Caco-2 (cell line): ENCODE measurements at regions of chr22 and their contacts with region 1.

Region 1: GRCh38 chr22:27647540-27647939 is 154.0 kb downstream of the MN1 start:
- DNase-seq: peak; percentile 74 to 85
- H3K4me3 ChIP-seq: no peak overlapping the region
- H3K4me3 Mint-ChIP-seq: no peak overlapping the region
- H3K27ac Mint-ChIP-seq: peak overlapping the region; percentile 68
- H3K4me1 ChIP-seq: peaks cover 49% of the 10 kb centered on the region
- H3K4me1 Mint-ChIP-seq: peaks cover 37% of the 10 kb centered on the region
- H3K27me3 ChIP-seq: no peaks in the 10 kb centered on the region
- H3K27me3 Mint-ChIP-seq: no peaks in the 10 kb centered on the region
- CTCF ChIP-seq: no peak

Region 2: DNA sequence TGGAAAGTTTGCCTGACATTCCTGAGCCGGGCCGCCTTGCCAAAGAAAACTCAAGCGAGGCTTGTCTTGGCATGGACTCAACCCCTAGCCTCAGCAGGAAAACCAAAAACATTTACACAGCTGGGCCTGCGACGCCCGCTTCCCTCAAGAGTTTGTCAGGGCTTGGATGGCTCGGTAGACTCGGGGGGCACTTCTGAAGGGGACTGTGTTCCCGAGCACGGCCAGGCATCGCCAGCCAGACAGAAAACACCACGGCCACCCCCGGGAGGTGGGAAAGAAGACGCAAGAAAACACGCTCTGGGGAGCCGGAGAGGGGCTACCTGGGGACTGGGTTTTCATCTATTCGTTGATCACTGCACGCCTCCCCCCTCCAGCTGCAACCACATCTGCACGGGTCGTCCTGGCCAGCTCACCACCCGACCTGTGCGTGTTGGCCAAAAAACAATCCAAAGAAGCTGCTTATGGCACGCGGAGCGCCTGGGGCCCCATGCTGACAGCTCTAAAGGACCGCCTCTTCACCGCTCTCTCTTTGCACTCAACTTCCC is 226.7 kb before region 1 on chr22:
- CTCF ChIA-PET with region 1: no interaction called
- POLR2A ChIA-PET with region 1: no interaction called
- intact Hi-C with region 1: no loop called
- DNase-seq: no peak
- H3K4me3 ChIP-seq: no peak overlapping the region
- H3K4me3 Mint-ChIP-seq: no peak overlapping the region
- H3K27ac Mint-ChIP-seq: no peak overlapping the region
- H3K4me1 ChIP-seq: no peaks in the 10 kb centered on the region
- H3K4me1 Mint-ChIP-seq: no peaks in the 10 kb centered on the region
- H3K27me3 ChIP-seq: no peaks in the 10 kb centered on the region
- H3K27me3 Mint-ChIP-seq: peaks cover 12% of the 10 kb centered on the region
- CTCF ChIP-seq: no peak

Region 3: GRCh38 chr22:27670701-27671412 is 23.3 kb after region 1 on chr22:
- CTCF ChIA-PET with region 1: no interaction called
- POLR2A ChIA-PET with region 1: no interaction called
- intact Hi-C with region 1: loop called (anchors 2 kb)
- DNase-seq: peak; percentile 95 to 97
- H3K4me3 ChIP-seq: no peak overlapping the region
- H3K4me3 Mint-ChIP-seq: peak overlapping the region; percentile 54
- H3K27ac Mint-ChIP-seq: peak overlapping the region; percentile 90
- H3K4me1 ChIP-seq: peaks cover 27% of the 10 kb centered on the region
- H3K4me1 Mint-ChIP-seq: peaks cover 36% of the 10 kb centered on the region
- H3K27me3 ChIP-seq: no peaks in the 10 kb centered on the region
- H3K27me3 Mint-ChIP-seq: no peaks in the 10 kb centered on the region
- CTCF ChIP-seq: no peak

Region 4: GRCh38 chr22:27682437-27682836 is 34.9 kb after region 1 on chr22:
- CTCF ChIA-PET with region 1: no interaction called
- POLR2A ChIA-PET with region 1: no interaction called
- intact Hi-C with region 1: no loop called
- DNase-seq: peak in 1 of 2 experiments; percentile 10
- H3K4me3 ChIP-seq: no peak overlapping the region
- H3K4me3 Mint-ChIP-seq: no peak overlapping the region
- H3K27ac Mint-ChIP-seq: no peak overlapping the region
- H3K4me1 ChIP-seq: 0 out of 2 replicates have a peak, but pooled peaks cover 8% of the 10 kb centered on the region
- H3K4me1 Mint-ChIP-seq: peaks cover 5% of the 10 kb centered on the region
- H3K27me3 ChIP-seq: no peaks in the 10 kb centered on the region
- H3K27me3 Mint-ChIP-seq: no peaks in the 10 kb centered on the region
- CTCF ChIP-seq: peak in 1 of 2 experiments; percentile 14